Activated naive CD4-positive, alpha-beta T cell treated with anti-CD3 and anti-CD28 coated beads, Interleukin-2, amount 10 ng/mL, durations not matched to agents 7 days and 5 days (primary cell): ENCODE measurements at regions of chr1 and their contacts with region 1.

Region 1: GRCh38 chr1:235971571-235972310 is 93.1 kb downstream of the NID1 start:
- DNase-seq: peak; percentile 92
- H3K4me3 Mint-ChIP-seq: peak overlapping the region; percentile 36
- H3K27ac Mint-ChIP-seq: peak overlapping the region; percentile 85
- H3K4me1 Mint-ChIP-seq: peaks cover 18% of the 10 kb centered on the region
- H3K27me3 Mint-ChIP-seq: peaks cover 12% of the 10 kb centered on the region

Region 2: DNA sequence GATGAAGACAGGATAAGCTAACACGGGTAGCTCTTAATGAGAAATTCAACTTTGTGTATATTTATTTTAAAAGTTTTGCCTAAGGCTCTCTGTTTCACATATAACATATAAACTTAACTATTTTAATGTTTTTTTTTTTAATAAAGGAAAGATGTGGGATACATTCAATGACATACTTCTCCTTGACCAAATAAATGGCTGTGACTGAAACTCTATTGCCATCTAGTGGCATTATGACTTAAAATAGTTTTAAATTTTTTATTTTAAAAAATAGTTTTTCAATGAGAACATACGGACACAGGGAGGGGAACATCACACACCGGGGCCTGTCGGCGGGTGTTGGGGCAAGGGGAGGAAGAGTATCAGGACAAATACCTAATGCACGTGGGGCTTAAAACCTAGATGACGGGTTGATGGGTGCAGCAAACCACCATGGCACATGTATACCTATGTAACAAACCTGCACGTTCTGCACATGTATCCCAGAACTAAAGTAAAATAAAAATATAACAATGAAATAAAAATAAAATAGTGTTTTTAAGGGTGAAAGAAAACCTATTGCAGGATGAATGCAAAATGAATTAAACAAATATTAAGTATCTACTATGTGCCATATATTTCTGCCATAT is 188.5 kb before region 1 on chr1:
- CTCF ChIA-PET with region 1: interaction called, 25 read pairs
- DNase-seq: no peak
- H3K4me3 Mint-ChIP-seq: no peak overlapping the region
- H3K27ac Mint-ChIP-seq: no peak overlapping the region
- H3K4me1 Mint-ChIP-seq: no peaks in the 10 kb centered on the region
- H3K27me3 Mint-ChIP-seq: no peaks in the 10 kb centered on the region

Region 3: DNA sequence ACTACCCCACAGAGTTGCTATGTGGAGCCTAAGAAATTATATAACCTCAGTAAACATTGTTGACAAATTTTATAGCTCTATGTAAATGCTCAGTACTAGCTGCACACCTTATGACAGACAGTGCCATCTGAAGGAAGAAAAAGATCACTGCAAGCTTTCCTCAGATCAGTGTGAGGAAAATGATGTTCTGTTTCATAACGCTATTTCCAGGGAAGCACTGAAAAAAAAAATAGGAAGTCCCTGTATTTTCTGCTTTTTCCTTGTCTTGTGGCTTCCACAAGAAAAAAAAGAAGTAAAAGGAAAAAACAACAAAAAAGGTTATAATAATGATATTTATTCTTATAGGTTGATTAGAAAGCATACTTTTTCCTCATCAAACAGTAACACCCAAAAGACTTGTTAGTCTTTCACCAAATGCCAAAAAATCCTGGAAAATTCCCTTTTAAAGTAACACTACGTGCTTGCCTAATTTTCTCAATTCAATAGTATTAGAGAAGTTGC is 128.2 kb before region 1 on chr1:
- CTCF ChIA-PET with region 1: interaction called, 22 read pairs
- DNase-seq: no peak
- H3K4me3 Mint-ChIP-seq: no peak overlapping the region
- H3K27ac Mint-ChIP-seq: no peak overlapping the region
- H3K4me1 Mint-ChIP-seq: peaks cover 42% of the 10 kb centered on the region
- H3K27me3 Mint-ChIP-seq: no peaks in the 10 kb centered on the region

Region 4: GRCh38 chr1:235866913-235867845 is 104.6 kb before region 1 on chr1:
- CTCF ChIA-PET with region 1: interaction called, 65 read pairs
- DNase-seq: peak; percentile 97
- H3K4me3 Mint-ChIP-seq: peak overlapping the region; percentile 100
- H3K27ac Mint-ChIP-seq: peak overlapping the region; percentile 98
- H3K4me1 Mint-ChIP-seq: peaks cover 47% of the 10 kb centered on the region
- H3K27me3 Mint-ChIP-seq: no peaks in the 10 kb centered on the region

Region 5: DNA sequence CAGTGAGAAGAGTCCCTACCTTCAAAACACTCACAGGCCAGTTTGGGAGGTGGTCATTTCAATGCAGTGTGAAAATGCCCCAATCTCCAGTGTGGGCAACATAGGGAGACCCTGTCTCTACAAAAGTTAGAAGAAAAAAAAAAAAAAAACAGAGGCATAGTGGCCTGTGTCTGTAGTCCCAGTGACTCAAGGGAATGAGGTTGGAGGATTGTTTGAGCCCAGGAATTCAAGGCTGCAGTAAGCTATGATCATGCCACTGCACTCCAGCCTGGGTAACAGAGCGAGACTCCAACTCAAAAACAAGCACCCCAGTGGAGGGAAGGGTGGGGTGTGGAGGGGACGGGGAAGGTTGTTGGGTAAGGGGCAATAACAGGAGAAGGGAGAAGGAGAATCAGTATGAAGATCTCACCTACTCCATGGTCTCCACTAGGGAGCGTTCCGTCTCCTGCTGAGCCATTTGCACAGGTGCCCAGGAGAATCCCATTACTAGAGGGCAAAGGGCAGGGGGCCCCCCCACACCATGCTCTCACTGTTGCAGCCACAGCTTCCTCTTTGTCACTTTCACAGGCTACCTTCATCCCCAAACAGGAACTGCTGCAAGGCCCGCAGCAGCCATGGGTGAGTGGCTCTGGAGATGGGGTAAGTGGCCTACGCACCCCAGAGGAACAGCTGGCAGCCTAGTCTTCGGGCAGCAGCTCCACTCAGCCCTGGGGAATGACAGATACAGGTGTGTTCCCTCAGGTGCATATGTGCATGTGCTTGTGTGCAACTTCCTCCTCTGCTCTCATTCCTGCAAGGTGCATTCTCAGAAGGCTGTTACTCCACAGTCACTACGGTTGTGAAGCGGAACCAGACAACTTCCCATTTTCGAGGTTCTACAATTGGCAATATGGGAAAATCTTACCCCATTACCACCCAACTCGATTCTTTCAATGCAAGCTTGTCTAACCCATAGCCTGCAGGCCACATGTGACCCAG is 17.1 kb before region 1 on chr1:
- CTCF ChIA-PET with region 1: interaction called, 36 read pairs
- DNase-seq: peak; percentile 64
- H3K4me3 Mint-ChIP-seq: no peak overlapping the region
- H3K27ac Mint-ChIP-seq: peak overlapping the region; percentile 29
- H3K4me1 Mint-ChIP-seq: peaks cover 35% of the 10 kb centered on the region
- H3K27me3 Mint-ChIP-seq: peaks cover 7% of the 10 kb centered on the region

Region 6: GRCh38 chr1:235999259-235999925 is 27.7 kb after region 1 on chr1:
- CTCF ChIA-PET with region 1: interaction called, 27 read pairs
- DNase-seq: peak; percentile 78
- H3K4me3 Mint-ChIP-seq: peak overlapping the region; percentile 4
- H3K27ac Mint-ChIP-seq: peak overlapping the region; percentile 93
- H3K4me1 Mint-ChIP-seq: peaks cover 81% of the 10 kb centered on the region
- H3K27me3 Mint-ChIP-seq: peaks cover 7% of the 10 kb centered on the region